Cardiac septum (tissue), 1 donor: ENCODE measurements at regions of chr1 and their contacts with region 1.

Region 1: GRCh38 chr1:10514490-10515235 is 39.9 kb downstream of the PEX14 start:
- DNase-seq: no peak

Region 2: DNA sequence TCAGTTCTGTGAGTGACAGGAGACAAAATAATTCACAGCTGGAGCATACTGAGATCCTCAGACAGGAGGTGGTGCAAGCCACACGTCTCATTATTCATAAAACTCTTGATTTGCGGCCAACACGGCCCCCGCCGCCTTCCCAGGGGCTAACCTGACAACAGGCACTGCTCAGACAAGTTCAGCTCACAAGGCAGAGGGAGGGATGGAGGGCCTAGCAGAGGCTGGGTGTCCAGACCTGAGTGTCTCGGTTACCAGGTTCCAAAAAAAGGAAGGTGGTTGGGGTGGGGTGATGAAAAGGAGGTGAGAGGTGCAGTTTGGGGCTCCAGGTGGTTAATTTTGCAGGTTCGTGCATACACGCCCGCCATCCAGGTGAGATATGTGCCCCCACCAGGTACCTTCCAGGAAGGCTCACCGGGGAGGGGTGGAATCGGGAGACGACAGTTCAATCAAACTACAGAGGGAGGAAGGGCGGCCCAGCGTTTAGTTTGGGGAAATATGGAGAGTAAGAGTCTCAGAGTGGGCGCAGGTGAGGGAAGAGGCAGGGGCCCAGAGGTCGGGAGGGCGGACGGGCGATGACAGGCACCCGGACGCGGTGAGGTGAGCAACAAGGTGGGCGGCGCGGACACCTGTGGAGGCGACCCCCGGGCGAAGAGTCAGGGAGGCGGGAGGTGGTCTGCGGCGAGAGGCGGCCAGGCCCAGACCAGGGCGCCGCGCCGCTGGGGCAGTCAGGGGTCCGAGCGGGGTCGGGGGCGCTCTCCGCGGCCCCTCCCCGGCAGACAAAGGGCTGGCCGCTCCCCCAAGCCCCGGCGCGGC is 605.2 kb before region 1 on chr1:
- intact Hi-C with region 1: no loop called
- DNase-seq: no peak

Region 3: GRCh38 chr1:10540277-10541005 is 25.8 kb after region 1 on chr1:
- intact Hi-C with region 1: no loop called
- DNase-seq: no peak

Region 4: DNA sequence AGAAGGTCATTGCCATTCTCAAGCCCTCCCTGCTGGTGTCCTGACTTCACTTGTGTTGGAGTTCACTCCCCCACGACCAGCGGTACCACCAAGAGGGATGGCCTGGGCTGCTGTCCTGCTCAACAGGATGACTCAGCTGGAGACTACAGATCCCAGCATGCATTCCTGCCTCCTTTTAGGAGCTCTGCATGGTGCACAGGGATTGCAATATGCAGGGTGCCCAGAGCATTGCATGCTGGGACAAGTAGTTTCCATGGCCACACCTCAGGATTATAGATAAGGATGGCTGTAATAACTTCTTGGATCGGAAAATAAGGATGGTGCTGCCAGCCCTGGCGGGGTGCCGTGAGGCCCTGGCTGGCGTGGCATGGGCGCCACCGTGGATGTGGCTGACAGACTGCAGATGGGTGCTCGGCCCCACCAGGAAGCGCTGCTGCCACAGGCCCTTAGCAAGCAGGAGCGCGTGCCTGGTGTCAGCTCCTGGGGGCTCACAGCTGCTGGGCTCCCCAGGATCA is 131.7 kb after region 1 on chr1:
- intact Hi-C with region 1: loop called (anchors 5 kb)
- DNase-seq: peak; percentile 85

Region 5: DNA sequence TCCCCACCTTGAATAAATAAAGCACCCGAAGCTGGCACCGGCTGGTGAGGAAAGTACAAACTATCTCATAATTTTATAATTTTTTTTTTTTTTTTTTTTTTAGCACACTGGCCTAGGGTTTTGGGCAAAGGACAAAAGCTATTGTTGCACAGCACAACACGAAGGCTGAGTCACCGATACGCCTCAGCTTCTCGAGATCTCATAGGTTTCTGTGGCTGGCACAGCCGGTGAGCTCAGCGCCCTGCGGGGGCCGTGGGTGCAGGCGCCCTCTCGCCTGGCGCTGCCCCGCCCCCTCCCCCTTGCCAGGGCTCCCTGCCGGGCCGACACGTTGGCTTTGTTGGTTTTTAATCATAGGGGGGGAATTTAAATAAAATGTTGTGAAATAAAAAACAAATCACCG is 264.5 kb after region 1 on chr1:
- intact Hi-C with region 1: no loop called
- DNase-seq: no peak